KBM-7 (cell line): ENCODE measurements at regions of chr15 and their contacts with region 1.

Region 1: GRCh38 chr15:85831415-85832113 is 36.8 kb upstream of the KLHL25 start:
- DNase-seq: peak; percentile 68

Region 2: DNA sequence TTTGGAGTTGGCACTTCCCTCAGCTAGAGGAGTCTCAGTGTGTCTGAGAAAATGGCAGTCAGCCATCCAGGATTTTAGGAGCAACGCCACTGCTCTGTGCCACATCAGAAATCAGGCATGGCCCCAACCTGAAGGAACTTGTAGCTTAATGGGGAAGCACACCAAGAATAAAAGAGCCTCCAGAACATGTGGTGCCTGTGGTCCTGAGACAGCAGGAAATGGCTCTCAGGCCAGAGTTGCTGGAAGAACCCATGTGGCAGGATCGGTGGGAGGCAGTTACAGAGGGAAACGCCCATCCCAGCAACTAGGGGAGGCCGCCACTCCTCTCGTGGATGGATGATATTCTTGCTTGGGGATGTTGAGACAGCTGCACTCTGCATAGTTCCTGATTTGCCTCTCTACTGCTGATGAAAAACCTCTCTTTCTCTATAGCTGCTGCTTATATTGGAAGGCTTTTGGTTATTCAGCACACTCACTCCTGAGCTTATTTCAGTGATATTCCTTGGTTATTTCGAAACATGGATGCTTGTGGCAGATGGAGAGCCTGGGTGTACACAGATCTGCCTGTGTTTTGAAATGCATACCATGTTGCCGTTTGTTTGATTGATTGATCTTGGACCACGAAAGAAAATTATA is 89.3 kb before region 1 on chr15:
- in situ Hi-C with region 1: loop called (anchors 10 kb)
- DNase-seq: peak; percentile 53